ENCODE measurements at regions of chr2 and their contacts with region 1.

Region 1: DNA sequence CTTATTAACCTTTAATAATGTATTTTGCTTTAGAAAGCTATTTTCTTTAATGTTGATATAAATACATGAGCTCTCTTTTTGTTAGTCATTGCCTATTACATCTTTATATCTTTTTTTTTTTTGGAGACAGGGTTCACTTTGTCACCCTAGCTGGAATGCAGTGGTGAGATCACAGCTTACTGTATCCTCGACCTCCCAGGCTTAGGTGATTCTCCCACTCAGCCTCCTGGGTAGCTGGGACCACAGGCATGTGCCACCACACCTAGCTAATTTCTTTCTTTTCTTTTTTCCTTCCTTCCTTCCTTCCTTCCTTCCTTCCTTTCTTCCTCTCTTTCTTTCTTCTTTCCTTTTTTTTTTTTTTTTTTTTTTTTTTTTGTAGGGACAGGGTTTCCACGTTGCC is 15.4 kb downstream of the NAB1 start:
- DNase-seq: no peak
- H3K4me3 ChIP-seq: no peak overlapping the region
- H3K27ac ChIP-seq: no peak overlapping the region
- H3K4me1 ChIP-seq: peaks cover 0 to 12% (median 5%) of the 10 kb centered on the region in 4 experiments
- H3K27me3 ChIP-seq: no peaks in the 10 kb centered on the region

Region 2: GRCh38 chr2:190158798-190159434 is 505.3 kb before region 1 on chr2:
- CTCF ChIA-PET with region 1: no interaction called
- POLR2A ChIA-PET with region 1: no interaction called
- DNase-seq: no peak
- H3K4me3 ChIP-seq: no peak overlapping the region
- H3K27ac ChIP-seq: no peak overlapping the region
- H3K4me1 ChIP-seq: no peaks in the 10 kb centered on the region
- H3K27me3 ChIP-seq: no peaks in the 10 kb centered on the region

Region 3: GRCh38 chr2:190649035-190649797 is 15.0 kb before region 1 on chr2 and contains the start of gene NAB1:
- CTCF ChIA-PET with region 1: interaction called, 50 read pairs
- POLR2A ChIA-PET with region 1: interaction called, 3 read pairs
- DNase-seq: peak; percentile 54 to 85 (median 78)
- H3K4me3 ChIP-seq: peak within 1 kb of the TSS; percentile 77 to 99 (median 86)
- H3K27ac ChIP-seq: peak within 1 kb of the TSS; percentile 87 to 90
- H3K4me1 ChIP-seq: peaks cover 10 to 46% (median 24%) of the 10 kb centered on the region in 4 experiments
- H3K27me3 ChIP-seq: no peaks in the 10 kb centered on the region

Region 4: GRCh38 chr2:190679813-190680591 is 15.8 kb after region 1 on chr2:
- CTCF ChIA-PET with region 1: interaction called, 32 read pairs
- POLR2A ChIA-PET with region 1: no interaction called
- DNase-seq: peak; percentile 29 to 33 (median 30)
- H3K4me3 ChIP-seq: no peak overlapping the region
- H3K27ac ChIP-seq: no peak overlapping the region
- H3K4me1 ChIP-seq: peaks cover 5 to 23% (median 19%) of the 10 kb centered on the region in 4 experiments
- H3K27me3 ChIP-seq: no peaks in the 10 kb centered on the region

Measured in common myeloid progenitor, CD34-positive (primary cell).